Gastrocnemius medialis (tissue), 4 donors: ENCODE measurements at regions of chr1 and their contacts with region 1.

Region 1: GRCh38 chr1:20732588-20733360 is at the start of gene SH2D5:
- DNase-seq: peak; percentile 64 to 77
- ATAC-seq: peak; percentile 85 to 87
- H3K4me3 ChIP-seq: peak within 1 kb of the TSS; percentile 55 to 62 (median 58)
- H3K27ac ChIP-seq: peak within 1 kb of the TSS in 3 of 4 donors; percentile 26 to 59 (median 52)
- H3K4me1 ChIP-seq: peaks cover 8 to 15% of the 10 kb centered on the region in 2 donors
- H3K27me3 ChIP-seq: peaks cover 0 to 13% (median 7%) of the 10 kb centered on the region in 3 donors
- CTCF ChIP-seq: peak in 4 of 5 experiments; percentile 17 to 42 (median 24)
- POLR2A ChIP-seq: no peak
- total RNA-seq, gene SH2D5: 0.53 TPM in 1 of 4 donors, not detected in the others

Region 2: GRCh38 chr1:20521960-20522861 is 210.6 kb before region 1 on chr1:
- in situ Hi-C with region 1: no loop called
- intact Hi-C with region 1: loop called (anchors 5 kb)
- DNase-seq: peak; percentile 29 to 47
- ATAC-seq: peak; percentile 79 to 82
- H3K4me3 ChIP-seq: no peak overlapping the region
- H3K27ac ChIP-seq: no peak overlapping the region
- H3K4me1 ChIP-seq: no peaks in the 10 kb centered on the region
- H3K27me3 ChIP-seq: no peaks in the 10 kb centered on the region
- CTCF ChIP-seq: peak; percentile 77 to 89 (median 88)
- POLR2A ChIP-seq: no peak

Region 3: DNA sequence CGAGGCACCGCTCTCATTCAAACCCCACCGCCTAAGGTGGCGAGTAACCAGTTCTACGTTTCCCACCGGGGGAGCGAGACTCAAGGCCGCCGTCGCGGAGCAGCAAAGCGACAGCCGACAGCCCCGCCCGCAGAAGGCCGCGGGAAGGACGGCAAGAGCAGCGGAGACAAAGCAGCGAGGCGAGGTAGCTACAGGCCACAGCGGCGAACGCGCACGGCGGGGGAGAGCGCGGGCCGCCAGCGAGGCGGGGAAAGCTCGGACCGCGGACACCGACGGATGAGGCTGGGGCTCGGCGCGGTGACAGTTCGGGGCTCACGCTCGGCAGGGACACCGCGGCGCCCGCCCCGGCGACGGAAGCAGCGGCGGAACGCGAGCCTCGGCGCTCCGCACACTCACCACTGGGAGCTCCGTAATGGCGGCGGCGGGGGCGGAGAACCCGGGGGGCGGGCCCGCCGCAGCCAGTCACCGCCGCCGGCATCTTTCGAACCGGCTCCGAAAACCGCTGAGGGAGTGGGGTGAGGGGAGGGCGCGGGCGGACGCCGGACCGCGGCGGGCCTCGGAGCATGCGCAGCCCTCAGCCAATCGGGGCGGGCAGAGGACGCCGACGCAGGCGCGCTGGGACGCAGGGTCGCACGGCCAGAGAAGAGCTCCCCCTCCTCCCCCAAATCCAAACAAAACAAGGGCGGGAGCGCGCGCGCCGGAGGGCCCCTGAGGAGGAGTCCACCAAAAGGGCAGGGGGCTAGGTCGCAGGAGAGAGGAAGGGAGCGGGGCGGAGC is 53.7 kb after region 1 on chr1:
- in situ Hi-C with region 1: no loop called
- intact Hi-C with region 1: loop called (anchors 5 kb)
- DNase-seq: peak; percentile 93
- ATAC-seq: peak; percentile 84 to 89
- H3K4me3 ChIP-seq: peak overlapping the region; percentile 76 to 93 (median 86)
- H3K27ac ChIP-seq: peak overlapping the region; percentile 95 to 98 (median 98)
- H3K4me1 ChIP-seq: peaks cover 32 to 43% of the 10 kb centered on the region in 2 donors
- H3K27me3 ChIP-seq: no peaks in the 10 kb centered on the region
- CTCF ChIP-seq: no peak
- POLR2A ChIP-seq: peak; percentile 72 to 94